GM12878 (cell line): ENCODE measurements at regions of chr3 and their contacts with region 1.

Region 1: GRCh38 chr3:98602078-98602678 is 8.8 kb upstream of the CPOX start:
- DNase-seq: peak; percentile 55
- ATAC-seq: peak; percentile 90
- H3K4me3 ChIP-seq: no peak overlapping the region
- H3K27ac ChIP-seq: no peak overlapping the region
- H3K4me1 ChIP-seq: peaks cover 12% of the 10 kb centered on the region
- H3K27me3 ChIP-seq: no peaks in the 10 kb centered on the region
- CTCF ChIP-seq: peak; percentile 73 to 83 (median 81); a peak in 5 of 6 replicates
- EP300 ChIP-seq: no peak
- POLR2A ChIP-seq: no peak
- RAD21 ChIP-seq: peak; percentile 99

Region 2: GRCh38 chr3:98617841-98618240 is 15.7 kb after region 1 on chr3:
- CTCF ChIA-PET with region 1: interaction called, 72 read pairs
- POLR2A ChIA-PET with region 1: interaction called, 5 read pairs
- RAD21 ChIA-PET with region 1: interaction called, 38 read pairs
- SMC1A ChIA-PET with region 1: interaction called, 66 read pairs
- in situ Hi-C with region 1: no loop called
- intact Hi-C with region 1: no loop called
- DNase-seq: no peak
- ATAC-seq: no peak
- H3K4me3 ChIP-seq: no peak overlapping the region
- H3K27ac ChIP-seq: no peak overlapping the region
- H3K4me1 ChIP-seq: peaks cover 1% of the 10 kb centered on the region; the same call in 1 of the 2 replicates
- H3K27me3 ChIP-seq: no peaks in the 10 kb centered on the region
- CTCF ChIP-seq: no peak
- EP300 ChIP-seq: no peak
- POLR2A ChIP-seq: no peak
- RAD21 ChIP-seq: no peak

Region 3: GRCh38 chr3:98705706-98706105 is 103.5 kb after region 1 on chr3:
- CTCF ChIA-PET with region 1: interaction called, 6 read pairs
- POLR2A ChIA-PET with region 1: no interaction called
- RAD21 ChIA-PET with region 1: no interaction called
- SMC1A ChIA-PET with region 1: interaction called, 10 read pairs
- in situ Hi-C with region 1: no loop called
- intact Hi-C with region 1: loop called (anchors 2 kb)
- DNase-seq: no peak
- ATAC-seq: peak; percentile 57; the same call in 2 of the 3 replicates
- H3K4me3 ChIP-seq: no peak overlapping the region
- H3K27ac ChIP-seq: no peak overlapping the region
- H3K4me1 ChIP-seq: no peaks in the 10 kb centered on the region
- H3K27me3 ChIP-seq: no peaks in the 10 kb centered on the region
- CTCF ChIP-seq: peak; percentile 19 to 32 (median 22); a peak in 4 of 6 replicates
- EP300 ChIP-seq: no peak
- POLR2A ChIP-seq: no peak
- RAD21 ChIP-seq: peak; percentile 57

Region 4: DNA sequence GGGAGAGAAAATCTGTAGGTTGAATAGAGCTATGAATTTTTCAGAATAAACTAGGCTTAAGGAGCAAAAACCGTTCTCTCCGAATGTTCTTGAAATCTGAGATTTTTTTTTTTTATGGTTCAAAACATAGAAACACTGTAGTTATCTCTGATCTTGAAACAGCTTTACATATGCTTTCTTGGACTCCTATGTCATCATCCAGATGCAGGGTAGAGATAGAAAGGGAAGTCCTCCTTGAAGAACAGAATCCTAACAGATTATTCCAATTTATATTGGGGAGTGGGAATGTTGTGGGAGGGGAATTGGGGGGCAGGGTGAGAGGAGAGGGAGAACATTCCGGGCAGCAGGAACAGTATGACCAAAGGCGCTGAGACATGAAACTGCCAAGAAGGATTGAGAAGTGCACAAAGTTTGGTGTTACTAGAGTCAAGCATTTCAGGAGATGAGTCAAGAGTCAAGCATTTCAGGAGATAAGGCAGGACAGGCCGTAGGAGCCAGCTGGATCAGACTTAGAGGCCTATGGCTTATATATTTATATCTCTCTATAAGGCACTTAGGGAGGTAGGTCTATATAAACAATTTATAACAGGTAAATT is 139.0 kb after region 1 on chr3:
- CTCF ChIA-PET with region 1: interaction called, 4 read pairs
- POLR2A ChIA-PET with region 1: interaction called, 5 read pairs
- RAD21 ChIA-PET with region 1: interaction called, 14 read pairs
- SMC1A ChIA-PET with region 1: interaction called, 18 read pairs
- in situ Hi-C with region 1: no loop called
- intact Hi-C with region 1: no loop called
- DNase-seq: no peak
- ATAC-seq: no peak
- H3K4me3 ChIP-seq: no peak overlapping the region
- H3K27ac ChIP-seq: no peak overlapping the region
- H3K4me1 ChIP-seq: peaks cover 9% of the 10 kb centered on the region
- H3K27me3 ChIP-seq: no peaks in the 10 kb centered on the region
- CTCF ChIP-seq: no peak
- EP300 ChIP-seq: no peak
- POLR2A ChIP-seq: no peak
- RAD21 ChIP-seq: no peak

Region 5: GRCh38 chr3:98798820-98799219 is 196.6 kb after region 1 on chr3:
- CTCF ChIA-PET with region 1: interaction called, 57 read pairs
- POLR2A ChIA-PET with region 1: no interaction called
- RAD21 ChIA-PET with region 1: interaction called, 29 read pairs
- SMC1A ChIA-PET with region 1: interaction called, 73 read pairs
- in situ Hi-C with region 1: no loop called
- intact Hi-C with region 1: no loop called
- DNase-seq: no peak
- ATAC-seq: peak; percentile 51
- H3K4me3 ChIP-seq: no peak overlapping the region
- H3K27ac ChIP-seq: no peak overlapping the region
- H3K4me1 ChIP-seq: no peaks in the 10 kb centered on the region
- H3K27me3 ChIP-seq: no peaks in the 10 kb centered on the region
- CTCF ChIP-seq: peak in 2 of 3 experiments; percentile 2 to 50; a peak in 2 of 6 replicates
- EP300 ChIP-seq: no peak
- POLR2A ChIP-seq: no peak
- RAD21 ChIP-seq: peak; percentile 56

Region 6: DNA sequence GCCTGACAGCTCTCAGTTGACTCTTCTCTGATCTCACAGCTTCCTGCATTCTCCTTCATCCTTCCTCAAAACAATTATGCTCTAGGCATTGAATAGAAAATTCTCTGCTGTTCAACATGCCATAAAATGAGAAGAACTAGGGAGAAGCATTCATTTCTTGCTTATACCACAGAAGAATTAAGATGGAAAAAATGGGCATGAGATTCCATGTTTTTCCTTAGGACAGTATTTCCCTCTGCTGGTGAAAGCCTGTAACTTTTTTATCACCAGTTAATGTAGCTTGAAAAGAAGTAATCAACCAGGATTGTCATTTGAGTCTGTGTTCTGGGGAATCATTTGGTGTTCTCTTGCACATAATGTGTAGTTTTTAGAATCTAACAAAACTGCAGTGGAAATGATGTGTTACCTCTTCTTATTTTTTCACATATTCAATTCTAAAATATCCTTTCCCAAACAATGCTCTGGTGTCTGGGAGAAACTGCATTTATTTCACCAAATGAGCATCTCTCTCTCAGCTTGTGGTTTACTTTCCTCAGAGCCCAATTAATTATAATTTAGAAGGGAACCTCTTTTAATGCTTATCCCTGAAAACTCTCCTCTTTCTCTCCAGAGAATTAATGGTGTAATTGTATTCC is 392.1 kb after region 1 on chr3:
- CTCF ChIA-PET with region 1: interaction called, 3 read pairs
- POLR2A ChIA-PET with region 1: no interaction called
- RAD21 ChIA-PET with region 1: no interaction called
- SMC1A ChIA-PET with region 1: interaction called, 8 read pairs
- in situ Hi-C with region 1: loop called (anchors 5 kb)
- intact Hi-C with region 1: loop called (anchors 5 kb)
- DNase-seq: no peak
- ATAC-seq: no peak
- H3K4me3 ChIP-seq: no peak overlapping the region
- H3K27ac ChIP-seq: no peak overlapping the region
- H3K4me1 ChIP-seq: no peaks in the 10 kb centered on the region
- H3K27me3 ChIP-seq: no peaks in the 10 kb centered on the region; a peak in 1 of 4 replicates
- CTCF ChIP-seq: peak; percentile 36 to 54 (median 47); a peak in 5 of 6 replicates
- EP300 ChIP-seq: no peak
- POLR2A ChIP-seq: no peak
- RAD21 ChIP-seq: peak; percentile 60